Transverse colon (tissue), 4 donors: ENCODE measurements at regions of chr2 and their contacts with region 1.

Region 1: GRCh38 chr2:60881047-60881932 is at the start of gene REL:
- DNase-seq: peak; percentile 95
- H3K4me3 ChIP-seq: peak within 1 kb of the TSS; percentile 83 to 99 (median 92)
- H3K27ac ChIP-seq: peak within 1 kb of the TSS; percentile 96 to 100 (median 98)
- H3K4me1 ChIP-seq: peaks cover 0 to 32% (median 22%) of the 10 kb centered on the region in 4 donors
- H3K27me3 ChIP-seq: no peaks in the 10 kb centered on the region
- CTCF ChIP-seq: peak in 1 of 5 experiments; percentile 11
- EP300 ChIP-seq: no peak
- POLR2A ChIP-seq: peak; percentile 96
- total RNA-seq, gene REL: 6.2 to 29.5 (median 14.9) TPM

Region 2: DNA sequence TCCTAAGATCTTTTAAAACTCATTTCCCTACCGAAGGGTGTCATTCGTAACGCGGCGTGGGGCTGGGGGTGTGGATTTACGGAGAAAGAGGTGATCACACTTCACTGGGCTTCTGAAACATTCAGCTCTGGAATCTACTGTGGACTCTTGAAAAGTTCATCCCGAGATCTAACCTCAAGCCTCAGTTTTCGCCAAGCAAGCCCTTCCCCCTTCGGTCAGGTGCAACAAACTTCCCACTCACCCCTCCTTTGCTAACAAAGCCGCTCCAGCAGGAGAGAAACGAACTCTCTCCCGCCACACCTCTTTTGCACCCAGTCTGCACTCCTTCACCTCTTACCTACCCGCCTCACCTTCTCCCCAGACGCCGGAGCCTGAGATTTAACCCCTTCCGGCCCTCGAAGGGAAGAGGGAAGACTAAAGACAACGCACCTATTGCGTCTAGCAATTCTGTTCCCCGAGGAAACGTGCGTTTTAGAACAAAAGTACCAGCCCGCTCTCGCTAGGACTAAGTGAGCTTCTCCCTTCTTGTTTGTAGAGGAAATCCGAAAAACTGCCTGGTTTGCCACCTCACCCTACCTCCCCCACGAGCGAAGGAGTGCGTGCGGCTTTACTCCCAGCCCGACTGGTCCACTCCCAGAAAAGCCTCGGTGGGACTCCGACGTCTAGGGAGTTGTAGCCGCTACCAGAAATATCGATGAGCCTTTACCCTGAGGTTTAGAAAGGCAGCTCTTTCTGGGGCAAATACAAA is 135.7 kb after region 1 on chr2:
- in situ Hi-C with region 1: no loop called
- intact Hi-C with region 1: loop called (anchors 10 kb)
- DNase-seq: peak; percentile 90
- H3K4me3 ChIP-seq: peak overlapping the region; percentile 84 to 95 (median 92)
- H3K27ac ChIP-seq: peak overlapping the region; percentile 95 to 97 (median 96)
- H3K4me1 ChIP-seq: peaks cover 18 to 48% (median 30%) of the 10 kb centered on the region in 4 donors
- H3K27me3 ChIP-seq: no peaks in the 10 kb centered on the region
- CTCF ChIP-seq: no peak
- EP300 ChIP-seq: peak; percentile 27
- POLR2A ChIP-seq: peak; percentile 49

Region 3: GRCh38 chr2:61117534-61117933 is 236.2 kb after region 1 on chr2:
- in situ Hi-C with region 1: no loop called
- intact Hi-C with region 1: no loop called
- DNase-seq: no peak
- H3K4me3 ChIP-seq: no peak overlapping the region
- H3K27ac ChIP-seq: no peak overlapping the region
- H3K4me1 ChIP-seq: no peaks in the 10 kb centered on the region
- H3K27me3 ChIP-seq: no peaks in the 10 kb centered on the region
- CTCF ChIP-seq: no peak
- EP300 ChIP-seq: no peak
- POLR2A ChIP-seq: no peak